ENCODE measurements at regions of chr22 and their contacts with region 1.

Region 1: GRCh38 chr22:40024201-40025061 is 29.7 kb downstream of the FAM83F start:
- DNase-seq: peak; percentile 43
- H3K4me3 Mint-ChIP-seq: no peak overlapping the region
- H3K27ac Mint-ChIP-seq: no peak overlapping the region
- H3K4me1 Mint-ChIP-seq: no peaks in the 10 kb centered on the region
- H3K27me3 Mint-ChIP-seq: no peaks in the 10 kb centered on the region

Region 2: GRCh38 chr22:39622881-39623367 is 401.5 kb before region 1 on chr22:
- intact Hi-C with region 1: loop called (anchors 1 kb)
- DNase-seq: peak; percentile 39
- H3K4me3 Mint-ChIP-seq: no peak overlapping the region
- H3K27ac Mint-ChIP-seq: no peak overlapping the region
- H3K4me1 Mint-ChIP-seq: peaks cover 4% of the 10 kb centered on the region
- H3K27me3 Mint-ChIP-seq: peaks cover 8% of the 10 kb centered on the region

Region 3: DNA sequence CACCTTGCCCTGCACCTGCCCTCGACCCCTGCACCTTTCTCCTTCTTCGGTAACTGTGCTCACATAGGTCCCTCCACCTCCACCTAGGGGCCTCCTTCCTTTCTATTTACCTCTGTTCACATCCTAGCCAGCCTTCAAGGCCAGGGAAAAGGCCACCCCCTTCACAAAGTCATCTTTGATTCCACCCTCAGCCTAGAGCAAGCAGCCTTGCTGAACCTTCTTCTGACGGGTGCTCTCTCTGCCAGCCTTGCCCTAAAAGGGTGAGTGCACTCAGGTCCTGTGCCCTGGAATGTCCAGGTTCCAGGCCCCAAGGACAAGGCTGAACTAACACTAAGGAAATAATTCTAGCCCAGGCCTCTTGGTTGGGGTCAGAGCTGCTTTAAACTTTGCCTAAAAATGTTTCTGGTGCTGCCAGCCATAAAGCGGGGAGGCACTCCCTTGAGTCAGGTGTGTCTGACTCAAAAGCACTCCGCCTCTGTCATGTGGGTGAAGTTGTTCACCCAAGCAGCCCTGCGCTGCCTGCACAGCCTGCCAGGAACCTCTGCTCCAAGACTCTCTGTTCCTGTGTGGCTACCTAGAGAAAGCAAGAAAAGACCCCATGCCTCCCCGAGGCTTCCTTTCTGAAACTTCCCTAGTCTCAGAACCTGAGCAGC is 38.9 kb before region 1 on chr22:
- intact Hi-C with region 1: no loop called
- DNase-seq: no peak
- H3K4me3 Mint-ChIP-seq: no peak overlapping the region
- H3K27ac Mint-ChIP-seq: no peak overlapping the region
- H3K4me1 Mint-ChIP-seq: peaks cover 11% of the 10 kb centered on the region
- H3K27me3 Mint-ChIP-seq: peaks cover 7% of the 10 kb centered on the region

Region 4: DNA sequence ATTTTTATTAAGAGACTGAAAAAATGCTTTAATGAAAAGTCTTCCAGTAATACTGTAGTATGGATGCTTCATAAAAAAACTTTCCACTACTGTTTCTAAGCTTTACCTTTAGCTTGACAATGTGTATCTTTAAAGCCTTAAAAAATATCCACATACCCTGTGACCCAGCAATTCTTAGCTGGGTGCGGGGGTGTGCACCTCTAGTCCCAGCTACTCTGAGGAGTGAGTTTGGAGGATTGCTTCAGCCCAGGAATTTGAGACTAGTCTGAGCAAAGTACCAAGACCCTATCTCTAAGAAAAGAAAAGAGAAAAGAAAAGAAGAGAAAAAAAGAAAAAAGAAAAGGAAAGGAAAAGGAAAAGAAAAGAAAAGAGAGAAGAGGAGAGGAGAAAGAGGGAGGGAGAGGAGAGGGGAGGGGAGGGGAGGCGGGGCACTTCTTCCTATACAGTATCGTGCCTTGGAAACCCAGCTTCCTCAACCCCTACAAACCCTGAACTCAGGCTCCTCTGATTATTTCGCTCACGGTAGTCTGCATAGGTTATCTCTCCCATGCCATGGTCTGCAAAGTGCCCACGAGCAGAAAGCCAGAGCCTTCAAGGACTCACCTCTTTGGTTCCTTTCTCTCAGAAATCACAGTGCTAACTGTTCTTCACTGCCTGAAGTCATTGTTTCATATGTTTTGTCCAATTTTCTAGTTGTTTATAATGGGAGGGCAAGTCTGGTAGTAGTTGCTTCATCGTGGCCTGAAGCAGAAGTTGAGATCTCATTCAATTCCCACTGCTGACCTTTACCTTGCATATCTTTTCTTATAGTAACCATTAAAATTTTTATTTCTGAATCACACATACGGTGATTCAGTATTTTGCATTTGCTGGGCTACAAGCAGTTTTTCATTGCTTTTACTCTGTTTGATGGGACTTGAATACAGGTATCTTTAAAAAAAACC is 52.5 kb after region 1 on chr22:
- intact Hi-C with region 1: no loop called
- DNase-seq: no peak
- H3K4me3 Mint-ChIP-seq: no peak overlapping the region
- H3K27ac Mint-ChIP-seq: peak overlapping the region; percentile 11
- H3K4me1 Mint-ChIP-seq: peaks cover 25% of the 10 kb centered on the region
- H3K27me3 Mint-ChIP-seq: no peaks in the 10 kb centered on the region

Region 5: DNA sequence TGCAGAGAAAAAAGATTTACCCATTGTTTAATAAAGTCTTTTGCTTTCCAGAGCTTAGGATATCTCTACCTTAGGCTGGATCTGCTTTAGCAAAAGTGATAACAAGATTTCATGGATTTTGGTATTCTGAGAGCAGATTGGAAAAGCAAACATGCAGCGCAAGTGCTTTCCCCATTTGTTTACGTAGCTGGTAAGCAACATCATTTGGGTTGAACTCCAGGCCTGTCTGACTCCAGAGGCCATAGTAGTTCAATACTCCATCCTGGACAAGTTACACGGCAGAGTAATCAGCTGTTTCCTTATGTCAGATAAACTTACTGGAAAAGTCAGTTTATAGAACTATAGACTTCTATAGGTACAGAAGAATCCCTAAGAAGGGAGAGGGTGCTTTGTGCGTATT is 112.7 kb after region 1 on chr22:
- intact Hi-C with region 1: no loop called
- DNase-seq: no peak
- H3K4me3 Mint-ChIP-seq: no peak overlapping the region
- H3K27ac Mint-ChIP-seq: no peak overlapping the region
- H3K4me1 Mint-ChIP-seq: peaks cover 5% of the 10 kb centered on the region
- H3K27me3 Mint-ChIP-seq: no peaks in the 10 kb centered on the region